Breast epithelium (tissue), 4 donors: ENCODE measurements at regions of chr4 and their contacts with region 1.

Region 1: DNA sequence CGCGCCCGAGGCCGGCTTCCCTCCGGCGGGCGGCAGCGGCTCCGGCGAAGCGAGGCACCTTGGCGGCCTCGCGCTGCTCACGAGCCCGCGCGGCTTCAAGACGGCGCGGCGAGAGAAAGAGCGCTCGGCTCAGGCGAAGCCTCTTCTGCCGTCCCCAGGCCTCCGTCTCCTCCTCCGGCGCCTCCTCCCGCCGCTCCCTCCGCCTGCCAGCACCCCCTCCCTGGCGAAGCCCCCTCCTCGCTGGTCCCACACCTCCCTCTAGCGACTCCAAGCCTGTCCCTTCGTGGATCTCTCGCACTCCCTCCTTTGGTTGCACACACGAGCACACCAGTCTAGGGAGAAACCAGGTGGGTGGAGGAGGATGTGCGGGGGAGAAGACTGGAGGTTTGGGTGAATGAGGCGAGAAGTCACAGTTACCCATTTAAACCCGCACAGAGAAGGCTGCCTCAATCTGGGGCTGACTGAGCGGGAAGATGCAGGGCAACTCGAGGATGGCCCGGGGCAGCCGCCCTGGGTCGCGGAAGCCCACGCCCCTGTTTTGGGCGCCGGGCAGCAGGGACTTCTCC is at the start of gene CAMK2D:
- DNase-seq: peak; percentile 70 to 79
- H3K4me3 ChIP-seq: peak within 1 kb of the TSS; percentile 64 to 94 (median 79)
- H3K27ac ChIP-seq: peak within 1 kb of the TSS; percentile 95 to 99
- H3K4me1 ChIP-seq: no peaks in the 10 kb centered on the region
- H3K27me3 ChIP-seq: no peaks in the 10 kb centered on the region
- CTCF ChIP-seq: peak in 2 of 3 donors; percentile 26 to 37
- POLR2A ChIP-seq: peak; percentile 17
- total RNA-seq, gene CAMK2D: 47.7 to 62.1 (median 57.7) TPM

Region 2: GRCh38 chr4:113383111-113383785 is 378.5 kb before region 1 on chr4:
- intact Hi-C with region 1: loop called (anchors 10 kb)
- DNase-seq: no peak
- H3K4me3 ChIP-seq: no peak overlapping the region
- H3K27ac ChIP-seq: peak overlapping the region; percentile 50 to 67
- H3K4me1 ChIP-seq: no peaks in the 10 kb centered on the region
- H3K27me3 ChIP-seq: no peaks in the 10 kb centered on the region
- CTCF ChIP-seq: no peak
- POLR2A ChIP-seq: no peak

Region 3: DNA sequence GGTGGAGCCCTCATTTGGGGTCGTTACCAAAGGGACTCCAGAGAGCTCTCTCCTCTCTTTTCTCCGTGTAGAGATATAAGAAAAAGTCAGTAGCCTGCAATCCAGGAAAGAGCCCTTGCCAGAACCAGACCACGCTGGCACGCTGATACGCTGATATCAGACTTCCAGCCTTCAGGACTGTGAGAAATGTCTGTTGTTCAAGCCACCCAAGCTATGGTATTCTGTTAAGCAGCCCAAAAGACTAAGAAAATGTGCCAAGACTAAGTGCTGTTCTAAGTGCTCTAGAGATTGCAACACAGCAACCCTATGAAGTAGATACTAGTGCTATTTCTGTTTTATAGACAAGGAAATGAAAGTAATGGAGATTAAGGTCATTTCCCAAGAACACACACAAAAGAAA is 205.8 kb before region 1 on chr4:
- intact Hi-C with region 1: loop called (anchors 10 kb)
- DNase-seq: no peak
- H3K4me3 ChIP-seq: no peak overlapping the region
- H3K27ac ChIP-seq: no peak overlapping the region
- H3K4me1 ChIP-seq: no peaks in the 10 kb centered on the region
- H3K27me3 ChIP-seq: no peaks in the 10 kb centered on the region
- CTCF ChIP-seq: no peak
- POLR2A ChIP-seq: no peak

Region 4: GRCh38 chr4:113823291-113823659 is 61.6 kb after region 1 on chr4:
- intact Hi-C with region 1: no loop called
- DNase-seq: no peak
- H3K4me3 ChIP-seq: no peak overlapping the region
- H3K27ac ChIP-seq: no peak overlapping the region
- H3K4me1 ChIP-seq: no peaks in the 10 kb centered on the region
- H3K27me3 ChIP-seq: no peaks in the 10 kb centered on the region
- CTCF ChIP-seq: no peak
- POLR2A ChIP-seq: no peak